Breast epithelium (tissue), 4 donors: ENCODE measurements at regions of chr2 and their contacts with region 1.

Region 1: GRCh38 chr2:218319813-218320365 is 27.6 kb upstream of the TMBIM1 start:
- DNase-seq: no peak
- H3K4me3 ChIP-seq: no peak overlapping the region
- H3K27ac ChIP-seq: no peak overlapping the region
- H3K4me1 ChIP-seq: no peaks in the 10 kb centered on the region
- H3K27me3 ChIP-seq: no peaks in the 10 kb centered on the region
- CTCF ChIP-seq: no peak
- POLR2A ChIP-seq: no peak

Region 2: DNA sequence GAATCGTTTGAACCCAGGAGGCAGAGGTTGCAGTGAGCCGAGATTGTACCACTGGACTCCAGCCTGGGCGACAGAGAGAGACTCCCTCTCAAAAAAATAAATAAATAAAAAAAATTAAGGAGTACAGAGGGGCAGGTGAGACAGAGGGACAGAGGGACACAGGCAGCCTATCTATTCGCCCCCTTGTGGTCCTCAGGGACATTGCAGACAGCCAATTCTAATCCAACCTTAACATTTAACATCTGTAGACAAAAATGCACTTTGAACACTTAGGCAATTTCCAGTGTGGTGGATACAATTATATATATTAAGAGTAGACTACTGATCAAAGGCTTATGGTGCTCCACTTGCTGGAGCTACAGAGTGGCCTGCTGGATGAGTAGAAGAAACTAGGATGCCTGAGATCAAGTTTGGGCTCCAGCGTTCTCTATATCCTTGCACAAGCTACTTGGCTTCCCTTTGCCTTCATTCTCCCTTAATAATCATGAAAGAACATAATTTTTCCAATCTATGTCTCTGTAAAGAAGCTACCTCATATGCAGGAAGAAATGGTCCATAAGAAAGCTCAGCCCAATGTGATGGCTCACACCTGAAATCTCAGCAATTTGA is 1915.8 kb before region 1 on chr2:
- intact Hi-C with region 1: loop called (anchors 10 kb)
- DNase-seq: no peak
- H3K4me3 ChIP-seq: no peak overlapping the region
- H3K27ac ChIP-seq: no peak overlapping the region
- H3K4me1 ChIP-seq: no peaks in the 10 kb centered on the region
- H3K27me3 ChIP-seq: no peaks in the 10 kb centered on the region
- CTCF ChIP-seq: peak; percentile 50 to 74 (median 57)
- POLR2A ChIP-seq: no peak

Region 3: GRCh38 chr2:217713395-217714286 is 606.2 kb before region 1 on chr2:
- intact Hi-C with region 1: no loop called
- DNase-seq: peak; percentile 79 to 83
- H3K4me3 ChIP-seq: no peak overlapping the region
- H3K27ac ChIP-seq: peak overlapping the region; percentile 59 to 76
- H3K4me1 ChIP-seq: peaks cover 0 to 19% of the 10 kb centered on the region in 2 donors
- H3K27me3 ChIP-seq: no peaks in the 10 kb centered on the region
- CTCF ChIP-seq: peak; percentile 90 to 97 (median 96)
- POLR2A ChIP-seq: no peak

Region 4: DNA sequence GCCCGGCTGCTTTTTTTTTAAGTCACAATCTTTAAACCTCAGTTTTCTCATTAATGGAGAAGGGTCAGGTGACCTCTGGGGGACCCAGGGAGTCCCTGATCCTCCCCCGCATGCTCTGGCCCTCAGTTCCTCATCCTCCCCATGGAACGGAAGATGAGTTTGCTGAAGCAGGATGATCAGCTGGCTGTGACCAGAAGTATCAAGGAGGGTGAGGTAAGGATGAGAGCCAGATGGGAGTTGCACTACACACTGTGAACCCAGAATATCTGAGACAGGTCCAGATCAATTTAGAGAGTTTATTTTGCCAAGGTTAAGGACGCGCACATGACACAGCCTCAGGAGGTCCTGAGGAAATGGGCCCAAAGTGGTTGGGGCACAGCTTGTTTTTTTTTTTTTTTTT is 40.6 kb after region 1 on chr2:
- intact Hi-C with region 1: loop called (anchors 1 kb)
- DNase-seq: no peak
- H3K4me3 ChIP-seq: no peak overlapping the region
- H3K27ac ChIP-seq: no peak overlapping the region
- H3K4me1 ChIP-seq: no peaks in the 10 kb centered on the region
- H3K27me3 ChIP-seq: no peaks in the 10 kb centered on the region
- CTCF ChIP-seq: no peak
- POLR2A ChIP-seq: no peak

Region 5: DNA sequence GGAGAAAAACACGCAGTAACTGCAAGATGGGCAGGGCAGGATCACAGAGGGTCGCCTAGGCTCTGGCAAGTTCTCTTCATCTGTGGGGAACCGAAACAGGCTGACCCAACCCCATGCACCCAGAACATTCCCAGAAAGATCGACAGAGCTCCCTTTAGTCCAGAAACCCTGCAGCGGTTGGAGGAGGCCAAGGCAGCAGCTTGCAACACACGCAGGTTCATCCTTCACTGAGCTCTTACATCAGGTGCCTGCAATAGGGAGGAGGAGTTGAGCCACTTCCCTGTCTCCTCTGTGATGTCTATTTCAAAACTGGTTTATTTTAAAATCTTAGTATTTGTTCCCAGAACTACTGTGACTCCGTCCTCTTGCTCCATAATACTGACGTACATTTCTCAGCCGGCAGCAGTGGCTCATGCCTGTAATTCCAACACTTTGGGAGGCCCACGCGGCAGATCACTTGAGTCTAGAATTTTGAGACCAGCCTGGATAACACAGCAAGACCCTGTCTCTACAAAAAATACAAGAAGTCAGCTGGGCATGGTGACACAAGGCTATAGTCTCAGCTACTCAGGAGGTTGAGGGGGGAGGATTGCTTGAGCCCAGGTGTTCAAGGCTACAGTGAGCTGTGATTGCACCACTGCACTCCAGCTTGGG is 50.6 kb after region 1 on chr2:
- intact Hi-C with region 1: no loop called
- DNase-seq: no peak
- H3K4me3 ChIP-seq: no peak overlapping the region
- H3K27ac ChIP-seq: peak overlapping the region in 1 of 2 donors; percentile 76
- H3K4me1 ChIP-seq: no peaks in the 10 kb centered on the region
- H3K27me3 ChIP-seq: no peaks in the 10 kb centered on the region
- CTCF ChIP-seq: no peak
- POLR2A ChIP-seq: no peak

Region 6: DNA sequence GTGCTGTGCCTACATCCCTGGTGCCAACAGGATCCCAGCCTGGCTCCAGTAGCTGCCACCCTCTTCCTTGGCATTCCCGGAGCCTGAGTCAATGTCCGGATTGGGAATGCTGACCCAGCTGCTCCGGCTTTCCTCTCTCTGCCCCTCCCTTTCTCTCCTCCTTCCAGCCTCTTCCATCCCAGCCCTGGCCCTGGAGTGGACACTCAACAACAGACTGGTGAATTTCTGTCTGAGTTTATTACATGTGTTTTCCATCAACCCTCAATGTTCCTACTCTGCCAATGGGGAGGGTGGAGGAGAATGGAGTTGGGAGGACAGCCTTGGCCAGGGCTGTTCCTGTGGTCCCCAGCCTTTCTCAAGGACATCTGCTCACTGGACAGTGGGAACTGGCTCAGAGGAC is 512.6 kb after region 1 on chr2:
- intact Hi-C with region 1: no loop called
- DNase-seq: no peak
- H3K4me3 ChIP-seq: no peak overlapping the region
- H3K27ac ChIP-seq: peak overlapping the region in 1 of 2 donors; percentile 32
- H3K4me1 ChIP-seq: no peaks in the 10 kb centered on the region
- H3K27me3 ChIP-seq: no peaks in the 10 kb centered on the region
- CTCF ChIP-seq: no peak
- POLR2A ChIP-seq: no peak

Region 7: DNA sequence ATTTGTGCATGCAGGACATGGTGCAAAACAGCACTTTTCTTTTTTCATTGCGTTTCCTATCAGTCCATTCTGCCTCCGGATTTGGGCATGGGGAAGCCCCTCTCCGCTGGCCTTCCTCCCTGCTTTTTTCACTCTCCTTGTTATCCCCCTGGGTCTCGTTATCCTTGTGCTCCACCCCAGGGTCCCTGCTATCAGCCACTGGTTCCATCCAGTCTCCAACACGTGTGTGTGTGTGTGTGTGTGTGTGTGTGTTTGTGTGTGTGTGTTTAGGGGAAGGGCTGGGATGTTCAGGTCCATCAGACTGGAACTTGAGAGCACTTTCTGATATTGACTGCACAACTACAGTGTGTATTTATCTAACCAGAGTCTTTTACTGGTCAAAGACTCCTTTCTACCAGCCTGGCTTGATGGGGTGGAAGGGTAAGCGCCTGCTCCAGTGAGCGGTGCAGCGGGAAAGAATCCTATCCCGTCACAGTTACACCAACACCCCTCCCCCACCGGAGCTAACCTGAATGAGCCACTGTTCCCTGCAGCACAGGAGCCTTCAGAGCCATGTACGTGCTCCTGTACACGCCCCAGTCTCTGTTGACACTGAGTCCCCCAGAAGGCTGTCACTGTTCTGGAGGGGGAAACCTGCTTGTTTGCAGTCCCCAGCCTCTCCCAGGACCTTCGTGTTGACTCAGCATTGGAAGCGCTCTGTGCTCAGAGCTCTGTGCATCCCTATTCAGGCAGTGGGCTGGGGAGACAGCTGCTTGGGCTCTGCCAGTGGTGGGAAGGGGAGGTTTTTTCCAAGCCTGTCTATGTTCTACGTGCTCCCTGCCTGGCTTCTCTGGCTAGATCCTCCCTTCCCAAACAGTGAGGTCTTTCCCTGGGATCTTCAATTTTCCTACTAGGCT is 1256.9 kb after region 1 on chr2:
- intact Hi-C with region 1: no loop called
- DNase-seq: no peak
- H3K4me3 ChIP-seq: no peak overlapping the region
- H3K27ac ChIP-seq: no peak overlapping the region
- H3K4me1 ChIP-seq: no peaks in the 10 kb centered on the region
- H3K27me3 ChIP-seq: no peaks in the 10 kb centered on the region
- CTCF ChIP-seq: no peak
- POLR2A ChIP-seq: no peak